IMR-90 (cell line): ENCODE measurements at regions of chr9 and their contacts with region 1.

Region 1: GRCh38 chr9:90102292-90102901 is 497.6 kb downstream of the GADD45G start:
- DNase-seq: peak; percentile 88
- ATAC-seq: peak; percentile 100
- H3K4me3 ChIP-seq: no peak overlapping the region
- H3K27ac ChIP-seq: no peak overlapping the region
- H3K4me1 ChIP-seq: no peaks in the 10 kb centered on the region
- H3K27me3 ChIP-seq: peaks cover 4% of the 10 kb centered on the region; the same call in 1 of the 2 replicates
- CTCF ChIP-seq: peak; percentile 73
- POLR2A ChIP-seq: no peak
- RAD21 ChIP-seq: peak; percentile 84

Region 2: GRCh38 chr9:89576404-89576839 is 526.0 kb before region 1 on chr9:
- CTCF ChIA-PET with region 1: no interaction called
- POLR2A ChIA-PET with region 1: no interaction called
- dilution Hi-C with region 1: no loop called
- in situ Hi-C with region 1: no loop called
- intact Hi-C with region 1: loop called (anchors 1 kb)
- DNase-seq: peak; percentile 50
- ATAC-seq: no peak
- H3K4me3 ChIP-seq: no peak overlapping the region
- H3K27ac ChIP-seq: no peak overlapping the region
- H3K4me1 ChIP-seq: no peaks in the 10 kb centered on the region
- H3K27me3 ChIP-seq: peaks cover 9% of the 10 kb centered on the region
- CTCF ChIP-seq: peak; percentile 62
- POLR2A ChIP-seq: no peak
- RAD21 ChIP-seq: peak; percentile 56

Region 3: DNA sequence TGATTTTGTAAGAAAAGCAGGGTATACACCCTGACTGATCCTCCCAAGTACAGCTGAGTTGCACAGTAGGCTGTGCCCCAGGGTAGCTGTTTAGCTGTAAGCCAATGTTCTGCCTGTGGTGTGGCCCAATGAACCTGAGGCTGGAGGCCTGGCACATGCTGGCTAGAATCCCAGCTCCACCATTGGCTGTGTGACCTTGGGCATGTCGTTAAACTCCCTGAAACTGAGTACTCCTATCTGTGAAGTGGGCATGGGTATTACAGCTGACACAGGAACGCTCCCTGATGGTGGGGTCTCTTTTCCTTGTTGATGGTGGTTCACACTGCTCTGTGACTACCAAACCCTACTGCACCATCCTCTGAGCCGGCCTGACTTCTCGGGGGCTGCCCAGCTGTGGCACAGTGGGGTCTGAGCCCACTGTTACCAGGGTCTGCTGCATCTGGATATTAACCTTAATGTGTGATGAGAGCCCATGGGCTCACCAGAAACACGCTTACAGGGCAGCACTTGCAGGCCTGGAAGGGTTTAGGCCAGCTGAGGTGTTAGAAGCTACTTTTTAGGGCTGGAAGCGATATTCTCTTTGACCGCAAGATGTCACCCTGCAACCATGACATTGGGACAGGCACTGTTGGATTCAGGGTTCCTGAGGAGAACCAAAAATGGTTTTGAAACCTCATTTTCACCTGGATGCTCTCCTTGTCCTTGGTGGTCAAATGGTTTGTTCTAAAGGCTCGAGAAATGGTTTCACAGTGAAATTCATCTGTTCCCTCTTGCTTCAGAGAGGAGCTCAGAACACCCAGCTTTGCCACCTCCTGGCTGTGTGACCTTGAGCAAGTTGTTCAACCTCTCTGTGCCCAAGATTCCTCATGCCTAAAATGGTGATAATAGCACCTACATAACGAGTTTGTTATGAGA is 504.4 kb before region 1 on chr9:
- CTCF ChIA-PET with region 1: interaction called, 14 read pairs
- POLR2A ChIA-PET with region 1: no interaction called
- dilution Hi-C with region 1: no loop called
- in situ Hi-C with region 1: loop called (anchors 5 kb)
- intact Hi-C with region 1: loop called (anchors 1 kb)
- DNase-seq: peak; percentile 59
- ATAC-seq: peak; percentile 81
- H3K4me3 ChIP-seq: no peak overlapping the region
- H3K27ac ChIP-seq: no peak overlapping the region
- H3K4me1 ChIP-seq: peaks cover 3% of the 10 kb centered on the region; the same call in 1 of the 2 replicates
- H3K27me3 ChIP-seq: peaks cover 36% of the 10 kb centered on the region
- CTCF ChIP-seq: peak; percentile 77
- POLR2A ChIP-seq: no peak
- RAD21 ChIP-seq: peak; percentile 88

Region 4: DNA sequence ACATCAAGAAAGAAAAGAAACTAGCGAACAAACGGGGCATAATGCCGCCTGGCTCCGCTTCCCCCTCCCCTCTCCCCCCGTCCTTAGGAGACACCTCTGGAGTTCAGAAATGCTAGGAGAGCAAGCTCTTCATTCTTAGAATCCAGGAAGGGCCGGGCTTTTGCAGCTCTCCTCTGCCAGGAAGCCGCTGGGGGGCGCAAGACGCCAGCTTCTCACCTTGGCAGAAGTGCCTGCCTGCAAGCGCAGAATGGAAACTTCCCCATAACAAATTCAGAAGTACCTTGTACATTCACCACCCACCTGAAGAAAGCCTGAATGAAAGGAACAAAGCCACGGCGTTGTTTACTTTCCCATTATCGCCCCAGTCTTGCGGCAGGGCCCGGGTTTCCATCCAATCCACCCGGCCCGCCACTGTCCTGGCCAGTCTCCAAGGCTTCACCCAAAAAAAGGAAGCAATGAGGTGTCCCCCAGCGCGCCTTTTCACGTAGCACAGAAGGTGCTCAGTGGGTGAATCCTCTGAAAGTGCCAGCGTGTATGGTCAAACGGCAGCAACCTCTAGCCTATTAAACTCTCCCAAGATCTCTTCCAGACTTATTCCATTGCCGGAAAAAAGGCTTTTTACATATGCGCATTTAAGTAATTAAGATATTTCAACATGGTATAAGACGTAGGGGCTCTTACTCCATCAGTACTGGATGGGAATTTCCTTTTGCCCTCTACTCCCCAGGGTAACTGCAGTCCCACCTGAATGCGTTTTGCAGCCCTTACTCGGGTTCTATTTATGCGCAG is 499.2 kb before region 1 on chr9:
- CTCF ChIA-PET with region 1: interaction called, 14 read pairs
- POLR2A ChIA-PET with region 1: no interaction called
- dilution Hi-C with region 1: no loop called
- in situ Hi-C with region 1: loop called (anchors 5 kb)
- intact Hi-C with region 1: loop called (anchors 1 kb)
- DNase-seq: peak; percentile 67
- ATAC-seq: peak; percentile 33
- H3K4me3 ChIP-seq: no peak overlapping the region
- H3K27ac ChIP-seq: no peak overlapping the region
- H3K4me1 ChIP-seq: peaks cover 5% of the 10 kb centered on the region
- H3K27me3 ChIP-seq: peaks cover 33% of the 10 kb centered on the region
- CTCF ChIP-seq: peak; percentile 74
- POLR2A ChIP-seq: no peak
- RAD21 ChIP-seq: peak; percentile 79

Region 5: GRCh38 chr9:90088434-90088833 is 14.0 kb before region 1 on chr9:
- CTCF ChIA-PET with region 1: no interaction called
- POLR2A ChIA-PET with region 1: no interaction called
- dilution Hi-C with region 1: no loop called
- in situ Hi-C with region 1: no loop called
- intact Hi-C with region 1: no loop called
- DNase-seq: no peak
- ATAC-seq: no peak
- H3K4me3 ChIP-seq: no peak overlapping the region
- H3K27ac ChIP-seq: no peak overlapping the region
- H3K4me1 ChIP-seq: no peaks in the 10 kb centered on the region; the same call in 1 of the 2 replicates
- H3K27me3 ChIP-seq: no peaks in the 10 kb centered on the region; the same call in 1 of the 2 replicates
- CTCF ChIP-seq: no peak
- POLR2A ChIP-seq: no peak
- RAD21 ChIP-seq: no peak

Region 6: GRCh38 chr9:90616806-90617205 is 514.4 kb after region 1 on chr9:
- CTCF ChIA-PET with region 1: no interaction called
- POLR2A ChIA-PET with region 1: no interaction called
- dilution Hi-C with region 1: no loop called
- in situ Hi-C with region 1: no loop called
- intact Hi-C with region 1: no loop called
- DNase-seq: no peak
- ATAC-seq: no peak
- H3K4me3 ChIP-seq: no peak overlapping the region
- H3K27ac ChIP-seq: no peak overlapping the region
- H3K4me1 ChIP-seq: no peaks in the 10 kb centered on the region
- H3K27me3 ChIP-seq: no peaks in the 10 kb centered on the region
- CTCF ChIP-seq: no peak
- POLR2A ChIP-seq: no peak
- RAD21 ChIP-seq: no peak